Heart right ventricle (tissue), 16 donors: ENCODE measurements at regions of chr9 and their contacts with region 1.

Region 1: GRCh38 chr9:29816954-29817703 is 2243.8 kb upstream of the C9orf72 start:
- DNase-seq: no peak
- ATAC-seq: no peak
- H3K4me3 ChIP-seq: no peak overlapping the region
- H3K27ac ChIP-seq: no peak overlapping the region
- H3K4me1 ChIP-seq: no peaks in the 10 kb centered on the region
- H3K27me3 ChIP-seq: no peaks in the 10 kb centered on the region
- CTCF ChIP-seq: no peak

Region 2: DNA sequence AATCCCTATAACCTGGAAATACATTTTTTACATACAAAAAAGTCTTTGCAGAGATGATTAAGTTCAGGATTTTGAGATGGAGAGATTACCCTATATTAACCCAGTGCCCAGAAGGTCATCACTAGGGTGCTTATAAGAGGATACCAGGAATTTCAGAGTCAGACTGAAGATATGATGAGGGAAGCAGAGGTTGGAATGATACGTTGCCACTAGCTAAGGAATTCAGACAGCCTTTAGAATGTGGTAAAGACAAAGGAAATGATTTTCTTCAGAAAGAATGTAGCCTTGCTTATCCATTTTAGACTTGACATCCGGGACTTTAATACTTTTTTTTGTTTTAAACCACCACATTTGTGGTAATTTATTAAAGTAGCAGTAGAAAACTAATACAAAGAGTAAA is 67.1 kb before region 1 on chr9:
- intact Hi-C with region 1: loop called in 1 of 10 experiments (anchors 10 kb)
- DNase-seq: no peak
- ATAC-seq: no peak
- H3K4me3 ChIP-seq: no peak overlapping the region
- H3K27ac ChIP-seq: no peak overlapping the region
- H3K4me1 ChIP-seq: no peaks in the 10 kb centered on the region
- H3K27me3 ChIP-seq: no peaks in the 10 kb centered on the region
- CTCF ChIP-seq: no peak